Activated CD4-positive, alpha-beta T cell treated with anti-CD3 and anti-CD28 coated beads for 36 hours (primary cell): ENCODE measurements at regions of chr12 and their contacts with region 1.

Region 1: DNA sequence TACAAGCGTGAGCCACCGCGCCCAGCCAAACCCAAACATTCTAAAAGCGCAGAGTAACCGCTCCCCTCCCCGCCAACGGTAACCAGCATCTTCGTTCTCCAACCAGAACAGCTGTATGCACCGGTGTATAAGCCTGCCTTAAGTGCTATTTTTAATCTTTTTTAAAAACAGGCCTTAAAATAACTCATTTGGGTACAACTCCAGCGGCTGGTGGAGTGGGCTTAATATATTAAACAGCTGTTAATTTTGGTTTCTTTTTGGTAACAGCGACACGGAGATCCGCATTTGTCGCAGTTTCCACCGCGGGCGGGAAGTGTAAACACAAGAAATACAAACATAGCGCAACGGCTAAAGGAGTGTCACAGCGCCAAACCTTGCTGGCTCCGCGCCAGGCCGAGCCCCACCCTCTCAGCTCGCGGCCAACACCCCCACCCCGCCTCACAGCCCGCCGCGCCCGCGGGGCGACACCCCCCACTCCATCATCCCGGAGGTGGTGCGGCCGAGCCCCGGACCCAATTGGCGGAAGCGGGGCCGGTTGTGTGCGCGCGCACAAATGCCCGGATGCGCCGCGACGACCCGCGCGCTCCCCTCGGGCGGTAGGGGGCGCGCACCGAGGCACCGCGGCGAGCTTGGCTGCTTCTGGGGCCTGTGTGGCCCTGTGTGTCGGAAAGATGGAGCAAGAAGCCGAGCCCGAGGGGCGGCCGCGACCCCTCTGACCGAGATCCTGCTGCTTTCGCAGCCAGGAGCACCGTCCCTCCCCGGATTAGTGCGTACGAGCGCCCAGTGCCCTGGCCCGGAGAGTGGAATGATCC is at the start of gene MDM2:
- DNase-seq: peak; percentile 96
- ATAC-seq: peak; percentile 89
- H3K4me3 Mint-ChIP-seq: peak within 1 kb of the TSS; percentile 88
- H3K27ac Mint-ChIP-seq: peak within 1 kb of the TSS; percentile 99
- H3K4me1 Mint-ChIP-seq: peaks cover 34% of the 10 kb centered on the region
- H3K27me3 Mint-ChIP-seq: no peaks in the 10 kb centered on the region
- total RNA-seq, gene MDM2: 114 to 119 TPM

Region 2: GRCh38 chr12:68331869-68332727 is 475.7 kb before region 1 on chr12 and contains the start of gene MDM1:
- CTCF ChIA-PET with region 1: no interaction called
- POLR2A ChIA-PET with region 1: no interaction called
- intact Hi-C with region 1: loop called (anchors 1 to 10 kb)
- DNase-seq: peak; percentile 97
- ATAC-seq: peak; percentile 98
- H3K4me3 Mint-ChIP-seq: peak within 1 kb of the TSS; percentile 80
- H3K27ac Mint-ChIP-seq: peak within 1 kb of the TSS; percentile 55
- H3K4me1 Mint-ChIP-seq: peaks cover 42% of the 10 kb centered on the region
- H3K27me3 Mint-ChIP-seq: peaks cover 2% of the 10 kb centered on the region
- total RNA-seq, gene MDM1: 12.7 to 13.6 TPM

Region 3: GRCh38 chr12:68745904-68746571 is 61.7 kb before region 1 on chr12 and contains the start of gene SLC35E3:
- CTCF ChIA-PET with region 1: interaction called, 18 read pairs
- POLR2A ChIA-PET with region 1: no interaction called
- intact Hi-C with region 1: loop called (anchors 1 kb)
- DNase-seq: peak; percentile 96
- ATAC-seq: peak; percentile 97
- H3K4me3 Mint-ChIP-seq: peak within 1 kb of the TSS; percentile 87
- H3K27ac Mint-ChIP-seq: peak within 1 kb of the TSS; percentile 92
- H3K4me1 Mint-ChIP-seq: peaks cover 16% of the 10 kb centered on the region
- H3K27me3 Mint-ChIP-seq: no peaks in the 10 kb centered on the region
- total RNA-seq, gene SLC35E3: 3.5 to 5.1 TPM

Region 4: DNA sequence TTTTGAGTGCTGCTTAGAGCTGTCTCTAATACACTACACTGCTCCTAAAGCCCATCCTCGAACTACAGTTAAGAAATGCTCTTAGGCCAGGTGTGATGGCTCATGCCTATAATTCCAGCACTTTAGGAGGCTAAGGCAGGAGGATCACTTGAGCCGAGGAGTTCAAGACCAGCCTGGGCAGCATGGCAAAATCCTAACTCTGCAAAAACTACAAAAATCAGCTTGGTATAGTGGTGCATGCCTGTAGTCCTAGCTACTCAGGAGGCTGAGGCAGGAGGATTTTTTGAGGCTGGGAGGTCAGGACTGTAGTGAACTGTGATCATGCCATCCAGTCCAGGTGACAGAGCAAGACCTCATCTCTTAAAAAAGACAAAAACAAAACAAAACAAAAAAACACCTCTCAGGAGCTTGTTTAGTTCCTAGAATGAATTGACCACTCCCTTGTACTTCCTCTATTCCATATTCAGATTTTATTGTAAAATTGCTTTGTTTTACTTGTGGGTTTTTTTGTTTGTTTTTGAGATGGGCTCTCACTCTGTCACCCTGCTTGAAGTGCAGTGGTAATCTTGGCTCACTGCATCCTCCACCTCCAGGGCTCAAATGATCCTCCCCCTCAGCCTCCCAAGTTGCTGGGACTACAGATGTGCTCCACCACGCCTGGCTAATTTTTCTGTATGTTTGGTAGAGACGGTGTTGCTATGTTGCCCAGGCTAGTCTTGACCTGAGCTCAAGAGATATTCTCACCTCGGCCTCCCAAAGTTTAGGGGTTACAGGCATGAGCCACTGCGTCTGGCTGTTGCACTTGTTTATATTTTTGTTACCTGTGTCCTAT is 13.8 kb after region 1 on chr12:
- CTCF ChIA-PET with region 1: interaction called, 16 read pairs
- POLR2A ChIA-PET with region 1: interaction called, 3 read pairs
- intact Hi-C with region 1: no loop called
- DNase-seq: no peak
- ATAC-seq: peak; percentile 42
- H3K4me3 Mint-ChIP-seq: no peak overlapping the region
- H3K27ac Mint-ChIP-seq: peak overlapping the region; percentile 55
- H3K4me1 Mint-ChIP-seq: peaks cover 22% of the 10 kb centered on the region
- H3K27me3 Mint-ChIP-seq: no peaks in the 10 kb centered on the region

Region 5: GRCh38 chr12:68831272-68831671 is 23.5 kb after region 1 on chr12:
- CTCF ChIA-PET with region 1: interaction called, 27 read pairs
- POLR2A ChIA-PET with region 1: no interaction called
- intact Hi-C with region 1: loop called (anchors 1 kb)
- DNase-seq: no peak
- ATAC-seq: no peak
- H3K4me3 Mint-ChIP-seq: no peak overlapping the region
- H3K27ac Mint-ChIP-seq: no peak overlapping the region
- H3K4me1 Mint-ChIP-seq: peaks cover 19% of the 10 kb centered on the region
- H3K27me3 Mint-ChIP-seq: no peaks in the 10 kb centered on the region

Region 6: DNA sequence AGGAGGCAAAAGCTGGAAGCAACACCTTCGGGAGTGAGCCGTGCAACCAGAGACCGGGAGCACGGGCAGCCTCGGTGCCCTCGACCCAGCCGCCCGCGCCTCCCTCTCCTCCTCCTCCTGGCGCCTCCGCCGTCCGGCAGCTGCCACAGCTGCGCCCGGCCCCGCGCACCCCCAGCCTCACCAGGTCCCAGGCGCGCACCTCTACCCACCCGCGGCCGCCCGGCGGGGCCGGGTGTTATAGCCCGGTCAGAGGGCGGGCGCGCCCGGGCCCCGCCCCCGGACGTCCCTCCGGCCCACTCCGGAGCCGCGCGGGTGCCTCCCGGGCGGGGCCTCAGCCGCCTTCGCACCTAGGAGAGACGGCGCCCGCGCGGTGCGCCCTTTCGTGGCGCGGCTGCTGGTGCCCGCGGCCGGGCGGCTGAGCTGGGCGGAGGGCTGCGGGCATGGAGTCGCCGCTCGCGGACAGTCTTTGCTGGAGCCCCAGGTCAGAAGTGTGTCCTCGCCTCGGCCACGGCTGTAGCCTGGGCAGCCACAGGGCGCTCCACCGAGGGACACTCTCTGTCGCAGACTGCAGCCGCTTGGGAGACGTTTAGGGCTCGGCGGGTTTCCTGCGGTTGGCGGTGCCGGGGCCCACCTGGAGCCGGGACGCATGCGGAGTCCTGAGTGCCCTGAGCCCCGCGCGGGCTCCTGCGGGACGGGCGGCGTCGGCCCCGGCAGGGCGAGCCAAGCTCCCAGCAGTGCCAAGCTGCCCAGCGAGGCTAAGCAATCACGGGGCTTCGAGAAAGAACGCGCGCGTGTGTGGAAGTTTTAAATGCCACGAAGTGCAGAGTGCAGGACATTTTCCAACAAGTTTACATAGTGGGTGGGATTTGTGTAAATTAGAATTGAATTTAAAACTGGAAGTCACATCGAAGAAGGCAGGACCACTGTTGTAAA is 125.4 kb after region 1 on chr12 and contains the start of gene CPM:
- CTCF ChIA-PET with region 1: no interaction called
- POLR2A ChIA-PET with region 1: no interaction called
- intact Hi-C with region 1: loop called in 1 of 2 experiments (anchors 1 kb)
- DNase-seq: peak; percentile 86
- ATAC-seq: peak; percentile 98
- H3K4me3 Mint-ChIP-seq: peak within 1 kb of the TSS; percentile 80
- H3K27ac Mint-ChIP-seq: peak within 1 kb of the TSS; percentile 71
- H3K4me1 Mint-ChIP-seq: peaks cover 9% of the 10 kb centered on the region
- H3K27me3 Mint-ChIP-seq: peaks cover 20% of the 10 kb centered on the region
- total RNA-seq, gene CPM: 18.0 to 18.7 TPM

Region 7: DNA sequence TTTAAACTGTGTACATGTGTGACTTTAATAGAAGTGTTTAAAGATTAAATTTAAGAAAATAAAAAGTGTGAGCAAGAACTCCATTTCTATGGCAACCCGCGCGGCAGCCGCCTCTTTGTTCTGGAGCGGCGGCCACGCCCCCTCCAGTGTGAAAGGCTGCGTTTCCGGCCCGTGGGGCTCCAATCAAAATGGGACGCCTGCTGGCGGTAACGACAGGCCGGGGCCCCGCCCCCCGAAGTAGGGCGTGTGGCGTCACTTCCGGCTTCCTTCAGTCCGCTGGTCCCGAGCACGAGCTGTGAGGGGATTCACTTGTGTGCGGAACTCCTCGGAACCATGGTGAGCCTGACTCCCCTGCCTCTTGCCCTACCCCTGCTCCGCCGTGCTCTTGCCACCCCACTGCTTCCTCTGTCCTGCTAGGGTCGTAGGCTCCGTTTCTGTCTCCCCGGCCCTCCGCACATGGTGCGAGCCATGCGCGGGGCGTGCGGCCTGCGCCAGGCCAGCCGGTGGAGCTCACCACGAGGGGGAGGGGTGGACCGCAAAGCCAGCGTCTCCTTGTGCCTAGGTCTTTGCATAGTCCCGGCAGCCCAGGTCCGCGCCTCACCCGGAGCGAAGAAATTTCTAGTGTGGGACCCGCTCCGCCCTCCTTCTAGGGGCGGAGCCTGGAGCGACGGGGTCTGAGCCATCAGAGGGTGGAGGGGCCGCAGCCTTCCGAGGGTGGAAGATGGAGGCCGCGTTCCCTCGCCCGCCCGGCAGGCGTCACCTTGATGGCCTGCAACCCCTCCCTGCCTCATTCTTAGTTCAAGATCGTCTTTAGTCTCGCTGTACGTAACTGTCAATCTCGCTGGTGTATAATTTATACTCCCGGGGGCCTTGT is 777.6 kb after region 1 on chr12 and contains the start of gene CCT2:
- CTCF ChIA-PET with region 1: no interaction called
- POLR2A ChIA-PET with region 1: no interaction called
- intact Hi-C with region 1: loop called in 1 of 2 experiments (anchors 10 kb)
- DNase-seq: peak; percentile 98
- ATAC-seq: peak; percentile 94
- H3K4me3 Mint-ChIP-seq: peak within 1 kb of the TSS; percentile 96
- H3K27ac Mint-ChIP-seq: peak within 1 kb of the TSS; percentile 95
- H3K4me1 Mint-ChIP-seq: peaks cover 30% of the 10 kb centered on the region
- H3K27me3 Mint-ChIP-seq: no peaks in the 10 kb centered on the region
- total RNA-seq, gene CCT2: 293 to 360 TPM